Mammary epithelial cell (primary cell): ENCODE measurements at regions of chr2 and their contacts with region 1.

Region 1: GRCh38 chr2:120934574-120935340 is 199.1 kb downstream of the GLI2 start:
- DNase-seq: peak; percentile 82
- H3K4me3 ChIP-seq: no peak overlapping the region
- H3K27ac ChIP-seq: no peak overlapping the region
- H3K4me1 ChIP-seq: peaks cover 29% of the 10 kb centered on the region
- H3K27me3 ChIP-seq: no peaks in the 10 kb centered on the region
- CTCF ChIP-seq: no peak

Region 2: DNA sequence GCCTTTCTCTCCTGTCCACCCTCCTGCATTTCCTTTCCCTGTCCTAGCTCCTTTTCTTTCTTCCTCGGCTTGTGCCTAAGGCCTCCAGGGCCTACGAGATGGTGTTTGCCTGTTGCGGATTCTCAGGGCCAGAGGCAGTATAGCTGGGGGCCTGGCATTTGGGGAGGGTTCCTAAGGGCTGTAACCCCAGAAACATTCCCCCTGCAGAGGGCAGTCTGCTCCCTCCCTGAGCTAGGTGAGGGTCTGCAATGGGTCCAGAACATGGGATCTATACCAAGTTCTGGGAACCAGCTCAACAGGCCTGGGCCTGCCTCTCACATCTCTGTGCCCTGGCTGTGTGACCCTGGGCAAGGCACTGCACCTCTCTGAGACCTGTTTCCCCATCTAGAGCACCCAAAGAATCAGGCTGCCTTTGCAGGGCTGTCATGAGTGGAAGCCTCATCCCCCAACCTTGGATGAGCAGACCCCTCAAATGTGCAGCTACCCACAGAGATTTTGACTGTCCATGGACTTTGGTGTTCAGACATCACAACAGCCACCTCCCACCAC is 101.6 kb before region 1 on chr2:
- CTCF ChIA-PET with region 1: no interaction called
- dilution Hi-C with region 1: loop called (anchors 5 kb)
- in situ Hi-C with region 1: no loop called
- intact Hi-C with region 1: no loop called
- DNase-seq: no peak
- H3K4me3 ChIP-seq: no peak overlapping the region
- H3K27ac ChIP-seq: no peak overlapping the region
- H3K4me1 ChIP-seq: no peaks in the 10 kb centered on the region
- H3K27me3 ChIP-seq: peaks cover 8% of the 10 kb centered on the region
- CTCF ChIP-seq: peak in 1 of 2 donors; percentile 1